GM10248 (cell line): ENCODE measurements at regions of chr1 and their contacts with region 1.

Region 1: GRCh38 chr1:36576118-36576517 is 93.4 kb upstream of the CSF3R start:
- DNase-seq: peak; percentile 79
- CTCF ChIP-seq: peak; percentile 82

Region 2: GRCh38 chr1:36553591-36554322 is 22.4 kb before region 1 on chr1:
- CTCF ChIA-PET with region 1: interaction called, 39 read pairs
- POLR2A ChIA-PET with region 1: no interaction called
- DNase-seq: peak; percentile 76
- CTCF ChIP-seq: peak; percentile 60

Region 3: DNA sequence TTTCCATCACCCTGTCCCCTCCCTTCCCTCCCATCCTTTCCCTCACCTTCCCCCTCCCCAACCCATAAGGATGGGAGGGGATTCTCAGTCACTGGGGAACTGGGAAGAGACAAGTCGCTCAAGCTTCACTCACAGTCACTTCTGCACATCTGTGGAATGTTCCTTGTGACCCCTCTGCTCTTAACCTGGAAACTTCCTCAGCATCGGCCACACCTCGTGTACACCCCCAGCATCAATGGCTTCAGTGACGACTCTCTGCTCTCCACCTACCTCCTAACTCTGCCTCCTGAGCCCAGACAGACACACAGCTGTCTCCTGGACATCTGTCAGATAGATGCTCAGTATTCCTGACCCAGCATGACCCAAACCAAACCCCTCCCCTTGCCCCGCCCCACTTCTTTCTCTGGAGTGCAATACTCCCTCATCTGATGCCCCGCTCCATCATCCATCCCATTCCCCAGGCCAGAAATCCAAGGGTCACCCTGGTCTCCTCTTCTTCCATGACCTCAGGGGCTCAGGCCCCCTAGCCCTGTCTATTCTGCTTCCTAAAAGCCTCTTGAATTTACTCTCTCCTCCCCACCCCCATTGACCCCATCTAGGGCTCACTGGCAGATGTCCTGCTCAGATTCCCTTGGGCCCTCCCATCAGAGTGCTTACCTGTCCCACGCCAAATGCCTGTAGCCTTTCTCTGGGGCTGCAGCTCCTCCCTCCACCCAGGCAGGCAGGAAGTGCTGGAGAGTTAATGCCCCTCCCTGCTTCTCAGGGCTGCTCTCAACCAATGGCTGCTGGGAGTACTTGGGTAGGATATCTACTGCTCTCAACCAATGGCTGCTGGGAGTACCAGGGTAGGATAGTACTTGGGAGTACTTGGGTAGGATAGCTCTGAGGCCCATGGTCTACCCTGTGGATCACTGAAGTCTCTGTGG is 10.3 kb before region 1 on chr1:
- CTCF ChIA-PET with region 1: interaction called, 39 read pairs
- POLR2A ChIA-PET with region 1: no interaction called
- DNase-seq: no peak
- CTCF ChIP-seq: no peak